CD4-positive, alpha-beta T cell (primary cell): ENCODE measurements at regions of chr17 and their contacts with region 1.

Region 1: DNA sequence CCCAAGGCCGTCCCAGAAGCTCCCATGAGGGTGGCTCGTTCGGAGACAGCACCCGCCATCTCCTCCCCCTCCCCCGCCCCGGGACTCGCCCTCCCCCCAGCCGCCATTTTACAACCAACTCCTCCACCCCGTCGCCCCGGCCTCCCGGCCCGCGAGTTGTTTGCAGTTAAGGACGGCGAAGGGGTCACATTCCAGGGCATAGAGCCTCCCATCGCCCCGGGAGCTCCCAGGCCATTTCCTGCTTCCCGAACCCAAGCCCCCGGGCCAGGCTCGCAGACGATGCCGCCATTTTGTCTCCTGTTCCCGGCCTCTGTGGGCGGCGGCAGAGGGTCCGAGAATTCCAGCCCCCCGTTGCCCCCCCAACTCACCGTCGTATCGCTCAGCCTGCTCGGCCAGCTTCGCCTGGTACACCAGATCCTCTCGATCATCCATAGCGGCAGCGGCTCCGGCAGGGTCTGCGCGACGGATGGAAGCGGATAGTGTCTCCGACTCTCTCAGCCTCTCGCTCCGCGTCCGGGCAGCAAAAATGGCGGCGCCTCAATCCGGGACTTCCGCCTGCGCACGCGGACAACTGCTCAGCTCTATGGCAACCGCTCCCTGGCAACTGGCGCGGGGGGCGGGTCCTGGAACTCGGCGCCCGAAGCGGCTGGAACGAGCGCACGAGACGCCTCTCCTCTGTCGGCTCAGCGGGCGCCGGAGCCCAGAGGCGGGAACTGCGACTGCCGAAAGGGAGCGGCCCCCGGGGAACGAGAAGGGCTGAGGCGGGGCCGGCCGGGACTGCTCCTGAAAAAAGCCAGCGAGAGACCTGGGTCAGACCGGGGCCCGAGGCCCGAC is at the start of gene YWHAE:
- DNase-seq: peak; percentile 92 to 97 (median 96)
- ATAC-seq: peak; percentile 86
- H3K4me3 ChIP-seq: peak within 1 kb of the TSS; percentile 95
- H3K4me3 Mint-ChIP-seq: peak within 1 kb of the TSS; percentile 100
- H3K27ac ChIP-seq: peak within 1 kb of the TSS; percentile 93 to 96
- H3K27ac Mint-ChIP-seq: peak within 1 kb of the TSS; percentile 98
- H3K4me1 ChIP-seq: peaks cover 39% of the 10 kb centered on the region
- H3K4me1 Mint-ChIP-seq: peaks cover 37% of the 10 kb centered on the region
- H3K27me3 ChIP-seq: no peaks in the 10 kb centered on the region
- H3K27me3 Mint-ChIP-seq: no peaks in the 10 kb centered on the region
- CTCF ChIP-seq: no peak
- total RNA-seq, gene YWHAE: 116 to 133 TPM

Region 2: DNA sequence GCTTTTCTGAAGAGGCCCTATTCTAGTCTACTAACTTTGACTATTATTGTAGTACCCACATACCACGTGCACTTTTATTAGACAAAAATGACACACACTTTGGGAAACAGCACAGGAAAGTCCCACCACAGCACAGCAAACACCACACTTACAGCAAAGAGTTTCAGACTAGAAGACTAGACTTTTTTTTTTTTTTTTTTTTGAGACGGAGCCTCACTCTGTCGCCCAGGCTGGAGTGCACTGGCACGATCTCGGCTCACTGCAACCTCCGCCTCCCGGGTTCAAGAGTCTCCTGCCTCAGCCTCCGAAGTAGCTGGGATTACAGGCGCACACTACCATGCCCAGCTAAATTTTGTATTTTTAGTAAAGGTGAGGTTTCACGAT is 20.0 kb before region 1 on chr17:
- CTCF ChIA-PET with region 1: interaction called, 6 read pairs
- POLR2A ChIA-PET with region 1: interaction called, 10 read pairs
- intact Hi-C with region 1: loop called in 1 of 2 experiments (anchors 2 kb)
- DNase-seq: peak in 2 of 14 experiments; percentile 68 to 76
- ATAC-seq: peak; percentile 62
- H3K4me3 ChIP-seq: no peak overlapping the region
- H3K4me3 Mint-ChIP-seq: peak overlapping the region; percentile 27
- H3K27ac ChIP-seq: peak overlapping the region; percentile 24 to 41
- H3K27ac Mint-ChIP-seq: peak overlapping the region; percentile 74
- H3K4me1 ChIP-seq: peaks cover 86% of the 10 kb centered on the region
- H3K4me1 Mint-ChIP-seq: peaks cover 72% of the 10 kb centered on the region
- H3K27me3 ChIP-seq: no peaks in the 10 kb centered on the region
- H3K27me3 Mint-ChIP-seq: no peaks in the 10 kb centered on the region
- CTCF ChIP-seq: no peak

Region 3: DNA sequence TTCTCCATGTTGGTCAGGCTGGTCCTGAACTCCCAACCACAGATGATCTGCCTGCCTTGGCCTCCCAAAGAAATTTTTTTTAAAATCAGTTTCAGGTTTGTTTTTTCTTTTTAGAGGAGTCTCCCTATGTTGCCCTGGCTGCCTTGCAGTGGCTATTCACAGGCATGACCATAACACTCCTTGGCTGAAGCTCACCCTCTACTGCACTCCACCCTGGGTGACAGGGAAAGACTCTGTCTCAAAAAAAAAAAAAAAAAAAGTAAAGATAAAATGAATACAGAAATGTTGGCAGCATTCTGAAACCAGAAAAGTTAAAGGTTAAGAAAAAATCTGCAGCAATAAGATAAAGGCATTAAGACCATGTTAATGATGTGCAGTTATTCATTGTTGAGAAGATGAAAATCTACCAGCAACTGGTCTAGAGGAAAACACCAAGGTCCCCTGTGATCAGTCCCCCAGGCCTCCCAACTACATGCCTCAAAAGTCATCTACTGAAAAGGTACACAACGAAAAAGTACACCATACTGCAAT is 14.9 kb before region 1 on chr17:
- CTCF ChIA-PET with region 1: interaction called, 6 read pairs
- POLR2A ChIA-PET with region 1: interaction called, 22 read pairs
- intact Hi-C with region 1: no loop called
- DNase-seq: no peak
- ATAC-seq: no peak
- H3K4me3 ChIP-seq: no peak overlapping the region
- H3K4me3 Mint-ChIP-seq: peak overlapping the region; percentile 48
- H3K27ac ChIP-seq: no peak overlapping the region
- H3K27ac Mint-ChIP-seq: peak overlapping the region; percentile 53
- H3K4me1 ChIP-seq: peaks cover 86% of the 10 kb centered on the region
- H3K4me1 Mint-ChIP-seq: peaks cover 56% of the 10 kb centered on the region
- H3K27me3 ChIP-seq: no peaks in the 10 kb centered on the region
- H3K27me3 Mint-ChIP-seq: no peaks in the 10 kb centered on the region
- CTCF ChIP-seq: no peak

Region 4: DNA sequence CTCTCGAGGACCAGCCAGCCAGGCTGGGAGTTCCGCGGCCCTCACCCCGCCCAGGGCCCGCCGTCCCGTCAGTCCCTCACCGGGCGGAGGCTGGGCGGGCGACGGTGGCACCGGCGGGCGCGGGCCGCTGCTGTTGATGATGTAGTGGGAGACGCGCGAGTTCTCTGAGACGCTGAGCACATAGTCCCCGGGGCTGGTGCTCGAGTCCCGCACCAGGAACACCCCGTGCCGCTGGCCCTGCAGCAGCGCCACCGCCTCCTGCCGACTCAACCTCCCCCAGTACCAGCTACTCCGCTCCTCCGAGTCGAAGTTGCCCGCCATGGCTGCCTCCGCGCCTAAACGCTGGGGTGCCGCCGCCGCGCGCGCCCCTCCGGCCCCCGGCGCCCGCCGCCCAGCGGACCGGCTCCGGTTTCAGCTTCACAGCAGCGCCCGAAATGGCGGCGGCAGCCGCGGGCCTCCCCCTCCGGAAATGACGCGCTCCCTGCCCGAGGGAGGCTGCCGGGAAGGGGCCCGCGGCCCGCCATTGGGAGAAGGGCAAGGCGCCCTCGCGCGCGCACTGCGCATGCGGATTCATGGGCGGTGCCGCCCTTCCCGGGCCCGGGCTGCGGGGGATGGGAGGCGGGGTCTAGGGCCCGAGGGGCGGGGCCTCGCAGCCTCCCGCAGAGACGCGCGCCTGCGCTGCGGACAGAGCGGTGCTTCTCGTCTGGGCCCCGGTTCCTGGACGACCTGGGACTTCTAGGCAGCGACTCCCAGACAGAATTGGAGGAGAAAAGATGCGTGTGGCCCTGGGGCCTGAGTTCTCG is 56.1 kb after region 1 on chr17 and contains the start of gene CRK:
- CTCF ChIA-PET with region 1: no interaction called
- POLR2A ChIA-PET with region 1: interaction called, 4 read pairs
- intact Hi-C with region 1: loop called in 1 of 2 experiments (anchors 1 kb)
- DNase-seq: peak; percentile 95 to 99 (median 99)
- ATAC-seq: peak; percentile 91
- H3K4me3 ChIP-seq: peak within 1 kb of the TSS; percentile 80
- H3K4me3 Mint-ChIP-seq: peak within 1 kb of the TSS; percentile 96
- H3K27ac ChIP-seq: peak within 1 kb of the TSS; percentile 88 to 91
- H3K27ac Mint-ChIP-seq: peak within 1 kb of the TSS; percentile 81
- H3K4me1 ChIP-seq: peaks cover 54% of the 10 kb centered on the region
- H3K4me1 Mint-ChIP-seq: peaks cover 51% of the 10 kb centered on the region
- H3K27me3 ChIP-seq: no peaks in the 10 kb centered on the region
- H3K27me3 Mint-ChIP-seq: no peaks in the 10 kb centered on the region
- CTCF ChIP-seq: no peak
- total RNA-seq, gene CRK: 13.6 to 14.5 TPM

Region 5: GRCh38 chr17:1462287-1463112 is 62.6 kb after region 1 on chr17:
- CTCF ChIA-PET with region 1: no interaction called
- POLR2A ChIA-PET with region 1: interaction called, 12 read pairs
- intact Hi-C with region 1: no loop called
- DNase-seq: no peak
- ATAC-seq: no peak
- H3K4me3 ChIP-seq: peak overlapping the region; percentile 7
- H3K4me3 Mint-ChIP-seq: peak overlapping the region; percentile 43
- H3K27ac ChIP-seq: no peak overlapping the region
- H3K27ac Mint-ChIP-seq: peak overlapping the region; percentile 71
- H3K4me1 ChIP-seq: peaks cover 42% of the 10 kb centered on the region
- H3K4me1 Mint-ChIP-seq: peaks cover 32% of the 10 kb centered on the region
- H3K27me3 ChIP-seq: no peaks in the 10 kb centered on the region
- H3K27me3 Mint-ChIP-seq: no peaks in the 10 kb centered on the region
- CTCF ChIP-seq: no peak